WTC11 (cell line): ENCODE measurements at regions of chr2 and their contacts with region 1.

Region 1: DNA sequence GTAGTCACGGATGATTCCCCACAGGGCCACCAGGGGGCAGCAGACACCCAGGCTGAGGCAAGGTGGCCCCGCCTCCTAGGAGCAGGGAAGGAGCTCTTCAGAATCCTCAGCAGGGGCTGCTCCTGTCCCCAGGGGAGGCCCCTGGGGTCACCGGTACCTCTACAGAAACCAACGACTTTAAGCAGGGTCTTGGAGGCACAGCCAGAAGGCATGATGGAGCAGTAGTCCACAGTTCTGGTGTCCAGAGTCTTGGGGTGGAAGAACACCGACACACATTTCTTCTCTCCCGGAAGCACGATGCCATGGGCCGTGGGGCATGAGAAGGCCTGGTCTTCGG is 11.5 kb downstream of the CFAP65 start:
- DNase-seq: peak; percentile 89
- ATAC-seq: peak; percentile 96
- H3K4me3 Mint-ChIP-seq: no peak overlapping the region
- H3K27ac Mint-ChIP-seq: 0 out of 2 replicates have a peak overlapping the region, but pooled peaks have one; percentile 26
- H3K4me1 Mint-ChIP-seq: peaks cover 3% of the 10 kb centered on the region
- H3K27me3 Mint-ChIP-seq: no peaks in the 10 kb centered on the region; the same call in 1 of the 2 replicates
- CTCF ChIP-seq: peak; percentile 94

Region 2: GRCh38 chr2:218959141-218959731 is 70.6 kb before region 1 on chr2 and contains the start of gene CDK5R2:
- CTCF ChIA-PET with region 1: interaction called, 12 read pairs
- POLR2A ChIA-PET with region 1: no interaction called
- DNase-seq: peak; percentile 96
- ATAC-seq: peak; percentile 82
- H3K4me3 Mint-ChIP-seq: peak within 1 kb of the TSS; percentile 84
- H3K27ac Mint-ChIP-seq: no peak within 1 kb of the TSS
- H3K4me1 Mint-ChIP-seq: peaks cover 27% of the 10 kb centered on the region
- H3K27me3 Mint-ChIP-seq: peaks cover 95% of the 10 kb centered on the region
- CTCF ChIP-seq: no peak
- total RNA-seq, gene CDK5R2: 0.16 to 0.46 TPM (median 0.26 TPM) in 3 replicates

Region 3: GRCh38 chr2:219010162-219010756 is 19.5 kb before region 1 on chr2:
- CTCF ChIA-PET with region 1: interaction called, 70 read pairs
- POLR2A ChIA-PET with region 1: no interaction called
- DNase-seq: peak; percentile 61
- ATAC-seq: peak; percentile 96
- H3K4me3 Mint-ChIP-seq: no peak overlapping the region
- H3K27ac Mint-ChIP-seq: no peak overlapping the region
- H3K4me1 Mint-ChIP-seq: no peaks in the 10 kb centered on the region
- H3K27me3 Mint-ChIP-seq: peaks cover 64% of the 10 kb centered on the region
- CTCF ChIP-seq: peak; percentile 43; the same call in 1 of the 2 replicates

Region 4: GRCh38 chr2:219073413-219074129 is 43.8 kb after region 1 on chr2:
- CTCF ChIA-PET with region 1: interaction called, 21 read pairs
- POLR2A ChIA-PET with region 1: no interaction called
- DNase-seq: peak; percentile 66
- ATAC-seq: peak; percentile 88
- H3K4me3 Mint-ChIP-seq: no peak overlapping the region
- H3K27ac Mint-ChIP-seq: no peak overlapping the region
- H3K4me1 Mint-ChIP-seq: peaks cover 6% of the 10 kb centered on the region
- H3K27me3 Mint-ChIP-seq: no peaks in the 10 kb centered on the region
- CTCF ChIP-seq: peak; percentile 70

Region 5: GRCh38 chr2:219109471-219109870 is 79.7 kb after region 1 on chr2:
- CTCF ChIA-PET with region 1: interaction called, 34 read pairs
- POLR2A ChIA-PET with region 1: no interaction called
- DNase-seq: peak; percentile 72
- ATAC-seq: peak; percentile 99
- H3K4me3 Mint-ChIP-seq: no peak overlapping the region
- H3K27ac Mint-ChIP-seq: no peak overlapping the region
- H3K4me1 Mint-ChIP-seq: peaks cover 9% of the 10 kb centered on the region
- H3K27me3 Mint-ChIP-seq: no peaks in the 10 kb centered on the region
- CTCF ChIP-seq: no peak

Region 6: DNA sequence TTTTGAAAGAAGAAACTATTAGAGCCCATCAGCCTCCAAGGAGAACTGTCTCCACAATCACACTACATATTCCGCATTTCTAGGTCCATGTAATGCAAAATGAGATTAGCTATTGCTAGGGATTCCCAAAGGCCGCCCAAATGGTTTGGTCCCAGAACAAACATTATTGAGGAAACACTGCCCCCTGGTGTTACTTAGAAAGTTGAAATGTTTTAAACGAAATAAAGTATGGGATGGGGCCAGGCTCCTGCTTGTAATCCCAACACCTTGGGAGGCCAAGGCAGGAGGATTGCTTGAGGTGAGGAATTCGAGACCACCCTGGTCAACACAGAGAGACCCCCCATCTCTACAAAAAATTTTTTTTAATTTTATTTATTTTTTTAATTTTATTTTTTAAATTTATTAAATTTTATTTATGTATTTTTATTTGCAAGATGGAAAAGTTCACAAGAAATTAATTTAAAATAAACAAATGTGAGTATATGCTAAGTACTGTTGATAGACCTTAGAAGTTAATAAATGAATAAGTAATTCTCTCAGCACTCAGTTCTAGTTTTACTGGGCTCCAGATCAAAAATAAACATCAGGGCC is 125.4 kb after region 1 on chr2:
- CTCF ChIA-PET with region 1: interaction called, 91 read pairs
- POLR2A ChIA-PET with region 1: no interaction called
- DNase-seq: peak; percentile 24
- ATAC-seq: peak; percentile 40
- H3K4me3 Mint-ChIP-seq: no peak overlapping the region
- H3K27ac Mint-ChIP-seq: no peak overlapping the region
- H3K4me1 Mint-ChIP-seq: peaks cover 10% of the 10 kb centered on the region
- H3K27me3 Mint-ChIP-seq: no peaks in the 10 kb centered on the region
- CTCF ChIP-seq: peak; percentile 53